ENCODE measurements at regions of chr13 and their contacts with region 1.

Region 1: GRCh38 chr13:91313103-91313502 is 34.4 kb upstream of the MIR17HG start:
- DNase-seq: peak in 1 of 2 donors; percentile 67
- ATAC-seq: peak; percentile 43 to 75 (median 71)
- H3K4me3 ChIP-seq: no peak overlapping the region
- H3K4me3 Mint-ChIP-seq: peak overlapping the region; percentile 49
- H3K27ac ChIP-seq: no peak overlapping the region
- H3K27ac Mint-ChIP-seq: peak overlapping the region in 1 of 2 donors; percentile 50
- H3K4me1 ChIP-seq: no peaks in the 10 kb centered on the region
- H3K4me1 Mint-ChIP-seq: peaks cover 7 to 17% of the 10 kb centered on the region in 2 donors
- H3K27me3 ChIP-seq: peaks cover 3% of the 10 kb centered on the region
- H3K27me3 Mint-ChIP-seq: peaks cover 0 to 17% of the 10 kb centered on the region in 2 donors
- CTCF ChIP-seq: peak; percentile 25

Region 2: DNA sequence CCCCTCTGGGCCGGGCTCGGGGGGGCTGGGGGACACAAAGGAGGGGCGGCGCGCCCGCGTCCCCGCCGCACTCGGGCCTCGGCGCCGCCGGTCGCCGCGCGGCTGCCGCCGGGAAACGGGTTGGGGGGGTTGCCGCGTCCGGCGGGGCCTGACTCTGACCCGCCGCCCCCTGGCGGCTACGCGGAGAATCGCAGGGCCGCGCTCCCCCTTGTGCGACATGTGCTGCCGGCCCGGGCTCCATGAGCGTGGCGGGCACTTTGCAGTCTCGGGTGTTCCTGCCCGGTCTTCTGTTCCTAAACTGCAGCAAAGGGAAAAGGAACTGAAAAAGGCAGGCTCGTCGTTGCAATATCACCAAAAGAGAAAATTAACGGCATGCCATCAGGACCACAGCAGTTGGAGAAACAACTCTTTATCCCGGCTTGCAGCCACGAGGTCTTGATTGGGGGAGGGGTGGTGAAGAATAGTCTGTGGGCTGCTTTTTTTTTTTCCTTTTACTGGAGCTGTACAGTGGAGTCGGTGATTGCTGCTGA is 35.9 kb after region 1 on chr13:
- intact Hi-C with region 1: loop called (anchors 1 kb)
- DNase-seq: peak; percentile 92 to 94
- ATAC-seq: peak; percentile 78 to 93 (median 82)
- H3K4me3 ChIP-seq: peak overlapping the region; percentile 64
- H3K4me3 Mint-ChIP-seq: peak overlapping the region; percentile 92
- H3K27ac ChIP-seq: peak overlapping the region; percentile 14
- H3K27ac Mint-ChIP-seq: peak overlapping the region; percentile 83
- H3K4me1 ChIP-seq: peaks cover 8% of the 10 kb centered on the region
- H3K4me1 Mint-ChIP-seq: peaks cover 16% of the 10 kb centered on the region in 2 donors
- H3K27me3 ChIP-seq: no peaks in the 10 kb centered on the region
- H3K27me3 Mint-ChIP-seq: no peaks in the 10 kb centered on the region
- CTCF ChIP-seq: peak; percentile 80

Region 3: DNA sequence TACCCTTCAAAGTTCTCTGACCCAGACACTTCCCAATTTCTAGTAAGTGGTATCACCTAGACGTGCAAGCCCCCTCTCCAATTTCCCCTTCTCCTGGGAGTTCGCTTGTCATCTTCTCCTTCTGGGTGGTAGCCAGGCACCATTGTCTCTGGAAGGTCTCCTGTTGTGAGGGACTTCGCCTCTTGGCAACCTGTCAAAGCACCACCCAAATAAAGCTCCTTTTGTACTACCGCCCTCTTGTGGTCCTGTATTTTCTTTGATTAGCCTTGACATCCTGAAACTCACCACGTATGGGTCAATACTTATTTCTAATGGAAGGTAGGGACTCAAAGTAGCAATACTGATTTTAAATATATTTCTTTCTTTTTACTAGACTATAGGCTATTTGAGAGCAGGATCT is 93.5 kb after region 1 on chr13:
- intact Hi-C with region 1: loop called (anchors 5 kb)
- DNase-seq: peak in 1 of 2 donors; percentile 67
- ATAC-seq: no peak
- H3K4me3 ChIP-seq: no peak overlapping the region
- H3K4me3 Mint-ChIP-seq: no peak overlapping the region
- H3K27ac ChIP-seq: no peak overlapping the region
- H3K27ac Mint-ChIP-seq: no peak overlapping the region
- H3K4me1 ChIP-seq: no peaks in the 10 kb centered on the region
- H3K4me1 Mint-ChIP-seq: no peaks in the 10 kb centered on the region
- H3K27me3 ChIP-seq: no peaks in the 10 kb centered on the region
- H3K27me3 Mint-ChIP-seq: peaks cover 3 to 29% of the 10 kb centered on the region in 2 donors
- CTCF ChIP-seq: peak; percentile 14

Region 4: DNA sequence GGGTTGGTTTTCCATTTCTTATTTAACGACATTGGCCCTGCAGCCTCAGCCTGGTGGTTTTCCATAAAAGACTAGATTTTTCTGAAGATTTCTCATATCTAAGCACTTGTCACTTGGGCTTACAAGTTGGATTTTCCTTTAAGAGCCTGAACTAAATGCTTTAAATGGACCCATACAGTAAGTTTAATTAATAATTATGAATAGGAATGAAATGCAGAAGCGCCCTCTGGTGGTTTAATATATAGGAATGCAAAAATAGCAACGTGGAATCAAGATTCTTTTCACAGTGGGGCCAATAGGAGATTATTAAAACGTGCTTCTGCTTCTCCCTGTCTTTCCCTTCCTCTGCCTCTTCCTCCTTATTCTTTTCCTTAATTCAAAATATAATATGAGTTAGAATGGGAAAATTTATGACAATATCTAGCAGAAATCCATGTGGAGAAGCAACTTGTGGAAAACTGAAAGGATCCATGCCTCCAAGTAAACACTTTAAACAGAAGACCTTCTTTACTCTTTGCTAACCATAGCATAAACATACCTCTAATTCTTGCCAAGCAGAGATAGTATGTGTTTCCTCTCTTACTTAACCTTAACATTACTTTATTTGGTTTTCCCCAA is 409.3 kb after region 1 on chr13:
- intact Hi-C with region 1: loop called (anchors 10 kb)
- DNase-seq: peak in 1 of 2 donors; percentile 36
- ATAC-seq: no peak
- H3K4me3 ChIP-seq: no peak overlapping the region
- H3K4me3 Mint-ChIP-seq: no peak overlapping the region
- H3K27ac ChIP-seq: no peak overlapping the region
- H3K27ac Mint-ChIP-seq: no peak overlapping the region
- H3K4me1 ChIP-seq: no peaks in the 10 kb centered on the region
- H3K4me1 Mint-ChIP-seq: no peaks in the 10 kb centered on the region
- H3K27me3 ChIP-seq: no peaks in the 10 kb centered on the region
- H3K27me3 Mint-ChIP-seq: no peaks in the 10 kb centered on the region
- CTCF ChIP-seq: peak; percentile 50